Right ventricle myocardium inferior (tissue), 1 donor: ENCODE measurements at regions of chr11 and their contacts with region 1.

Region 1: DNA sequence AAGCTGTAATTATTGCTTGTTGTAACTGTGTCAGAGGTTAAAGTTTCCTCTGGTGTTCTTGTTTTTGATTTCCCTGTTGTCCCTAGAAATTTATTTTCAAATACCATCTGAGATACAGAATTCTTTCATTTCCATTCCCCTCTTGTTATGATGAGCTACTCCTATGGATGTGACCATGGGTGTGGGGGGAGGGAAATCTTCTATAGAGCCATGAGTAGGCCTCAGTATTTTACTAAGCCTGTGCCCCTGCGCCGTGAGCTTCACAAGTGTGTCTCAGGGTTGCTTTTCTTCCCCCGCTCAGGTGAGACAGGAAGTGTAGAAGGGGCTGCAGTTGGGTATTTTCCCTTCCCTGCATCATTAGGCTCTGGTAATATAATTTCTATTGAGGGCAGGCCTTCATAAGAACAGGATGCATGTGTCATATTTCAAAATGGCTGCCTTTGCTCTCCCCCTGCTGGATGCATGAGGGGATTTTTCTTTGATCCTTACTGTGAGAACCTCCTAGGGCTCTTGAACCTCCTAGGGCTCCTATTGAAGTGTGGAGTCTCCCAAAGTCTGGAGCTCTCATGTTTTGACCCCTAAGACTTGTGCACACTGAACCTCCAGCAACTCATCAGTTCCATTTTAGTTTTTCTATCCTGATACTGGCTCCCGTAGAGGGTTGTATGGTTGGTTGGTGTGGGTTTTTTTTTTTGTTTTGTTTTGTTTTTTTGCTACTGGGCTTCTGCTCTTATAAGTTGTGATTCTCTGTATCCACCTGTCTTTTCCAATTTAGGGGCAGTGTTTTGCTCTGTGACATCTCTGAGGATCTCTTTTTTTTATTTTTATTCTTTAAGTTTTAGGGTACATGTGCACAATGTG is 658.2 kb downstream of the NTM start:
- DNase-seq: no peak
- ATAC-seq: peak; percentile 76

Region 2: GRCh38 chr11:131748151-131749050 is 280.2 kb before region 1 on chr11:
- intact Hi-C with region 1: loop called (anchors 5 kb)
- DNase-seq: peak; percentile 80
- ATAC-seq: peak; percentile 10

Region 3: DNA sequence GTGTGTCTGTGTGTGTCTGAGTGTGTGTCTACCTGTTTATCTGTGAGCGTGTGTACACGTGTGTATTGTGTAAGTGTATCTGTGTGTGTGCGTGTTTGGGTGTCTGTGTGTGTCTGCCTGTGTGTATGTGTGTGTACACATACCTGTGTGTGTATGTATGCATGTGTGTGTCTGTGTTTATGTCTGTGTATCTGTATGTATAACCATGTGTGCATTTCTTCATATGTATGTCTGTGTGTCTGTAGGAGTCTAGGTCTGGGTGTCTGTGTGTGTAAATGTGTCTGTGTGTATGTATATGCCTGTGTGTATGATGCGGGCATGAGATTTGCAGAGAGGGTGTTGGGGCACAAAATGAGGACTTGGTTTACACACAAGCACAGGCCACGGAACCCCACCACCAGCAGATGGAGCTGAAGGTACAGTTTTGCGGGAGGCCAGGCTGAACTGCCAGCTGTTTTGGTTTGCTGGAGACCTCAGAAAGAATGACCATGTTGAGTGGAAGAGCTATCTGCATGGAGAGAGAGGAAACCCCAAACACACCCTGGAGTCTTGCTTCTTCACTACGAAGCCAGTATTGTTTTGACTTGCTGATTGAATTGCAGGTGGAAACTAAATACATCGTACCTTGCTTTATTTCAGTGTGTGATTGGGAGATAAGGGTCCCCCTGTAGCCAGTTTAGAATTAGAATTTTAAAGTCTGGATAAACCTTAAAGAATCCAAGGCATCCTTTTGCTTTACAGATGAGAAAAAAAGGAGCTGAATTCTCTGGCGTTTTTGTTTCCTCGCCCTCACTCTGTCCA is 161.0 kb before region 1 on chr11:
- intact Hi-C with region 1: loop called (anchors 1 kb)
- DNase-seq: peak; percentile 76
- ATAC-seq: peak; percentile 80

Region 4: GRCh38 chr11:131924457-131925201 is 104.0 kb before region 1 on chr11:
- intact Hi-C with region 1: no loop called
- DNase-seq: no peak
- ATAC-seq: peak; percentile 20

Region 5: GRCh38 chr11:131938351-131938751 is 90.3 kb before region 1 on chr11:
- intact Hi-C with region 1: loop called (anchors 5 kb)
- DNase-seq: no peak
- ATAC-seq: no peak

Region 6: DNA sequence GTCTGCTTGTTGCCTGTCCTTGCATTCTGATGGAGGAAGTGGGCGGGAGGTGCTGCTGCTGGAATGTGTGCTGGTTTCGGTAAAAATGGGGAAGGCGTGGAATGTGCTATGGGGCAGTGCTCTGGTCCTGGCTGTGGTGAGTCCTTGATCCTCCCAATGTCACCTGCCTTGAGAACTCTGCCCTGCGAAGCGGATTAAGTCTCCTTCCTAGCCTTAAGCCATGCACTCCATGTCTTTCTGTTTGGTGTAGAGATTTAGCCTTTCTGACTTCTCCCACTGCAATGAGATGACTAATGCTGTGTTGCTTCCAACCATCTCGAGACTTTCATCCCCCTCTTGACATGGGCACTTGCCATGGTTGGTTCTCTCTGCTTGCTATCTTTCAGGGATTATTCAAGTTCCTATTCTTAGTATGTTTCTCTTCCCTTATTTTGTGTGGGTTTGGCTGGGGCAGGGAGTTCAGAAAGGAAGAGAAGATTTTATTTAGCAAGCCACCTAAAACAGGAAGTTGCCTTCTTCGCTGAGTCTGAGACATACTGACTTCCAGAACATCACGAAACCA is 29.7 kb after region 1 on chr11:
- intact Hi-C with region 1: no loop called
- DNase-seq: no peak
- ATAC-seq: peak; percentile 66